Activated naive CD4-positive, alpha-beta T cell treated with anti-CD3 and anti-CD28 coated beads for 36 hours (primary cell): ENCODE measurements at regions of chr11 and their contacts with region 1.

Region 1: GRCh38 chr11:3854977-3855807 is at the start of gene STIM1:
- DNase-seq: peak; percentile 99
- H3K4me3 Mint-ChIP-seq: peak within 1 kb of the TSS; percentile 97
- H3K27ac Mint-ChIP-seq: peak within 1 kb of the TSS; percentile 98
- H3K4me1 Mint-ChIP-seq: peaks cover 55% of the 10 kb centered on the region
- H3K27me3 Mint-ChIP-seq: no peaks in the 10 kb centered on the region
- total RNA-seq, gene STIM1: 62.9 to 68.5 TPM

Region 2: DNA sequence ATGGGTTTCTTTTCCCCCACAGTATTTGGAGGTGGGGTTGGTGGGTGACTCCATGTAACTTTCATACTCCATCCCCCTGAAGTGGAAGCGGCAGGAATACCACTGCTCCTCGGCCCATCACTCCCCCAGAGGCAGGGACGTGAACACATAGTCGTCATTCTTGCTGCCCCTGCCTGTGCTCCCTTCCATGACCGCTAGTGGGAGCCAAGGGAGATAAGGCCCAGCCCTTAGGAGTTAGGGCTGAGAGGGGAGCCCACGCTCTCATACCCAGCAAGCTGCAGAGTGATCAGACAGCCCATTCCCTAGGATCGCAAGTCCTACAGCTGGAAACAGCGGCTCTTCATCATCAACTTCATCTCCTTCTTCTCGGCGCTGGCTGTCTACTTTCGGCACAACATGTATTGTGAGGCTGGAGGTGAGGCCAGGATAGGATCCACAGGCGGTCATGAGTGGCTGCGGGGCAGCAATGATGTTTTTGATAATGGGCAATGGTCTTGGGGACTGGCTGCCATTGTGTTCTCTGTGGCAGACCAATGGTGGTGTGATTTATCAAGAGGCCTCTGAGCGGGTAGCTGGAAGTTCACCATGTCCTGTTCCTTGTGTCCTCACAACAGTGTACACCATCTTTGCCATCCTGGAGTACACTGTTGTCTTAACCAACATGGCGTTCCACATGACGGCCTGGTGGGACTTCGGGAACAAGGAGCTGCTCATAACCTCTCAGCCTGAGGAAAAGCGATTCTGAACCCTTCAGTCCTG is 30.3 kb before region 1 on chr11:
- CTCF ChIA-PET with region 1: interaction called, 8 read pairs
- intact Hi-C with region 1: loop called (anchors 1 kb)
- DNase-seq: peak; percentile 90
- H3K4me3 Mint-ChIP-seq: no peak overlapping the region
- H3K27ac Mint-ChIP-seq: peak overlapping the region; percentile 76
- H3K4me1 Mint-ChIP-seq: peaks cover 21% of the 10 kb centered on the region
- H3K27me3 Mint-ChIP-seq: no peaks in the 10 kb centered on the region

Region 3: DNA sequence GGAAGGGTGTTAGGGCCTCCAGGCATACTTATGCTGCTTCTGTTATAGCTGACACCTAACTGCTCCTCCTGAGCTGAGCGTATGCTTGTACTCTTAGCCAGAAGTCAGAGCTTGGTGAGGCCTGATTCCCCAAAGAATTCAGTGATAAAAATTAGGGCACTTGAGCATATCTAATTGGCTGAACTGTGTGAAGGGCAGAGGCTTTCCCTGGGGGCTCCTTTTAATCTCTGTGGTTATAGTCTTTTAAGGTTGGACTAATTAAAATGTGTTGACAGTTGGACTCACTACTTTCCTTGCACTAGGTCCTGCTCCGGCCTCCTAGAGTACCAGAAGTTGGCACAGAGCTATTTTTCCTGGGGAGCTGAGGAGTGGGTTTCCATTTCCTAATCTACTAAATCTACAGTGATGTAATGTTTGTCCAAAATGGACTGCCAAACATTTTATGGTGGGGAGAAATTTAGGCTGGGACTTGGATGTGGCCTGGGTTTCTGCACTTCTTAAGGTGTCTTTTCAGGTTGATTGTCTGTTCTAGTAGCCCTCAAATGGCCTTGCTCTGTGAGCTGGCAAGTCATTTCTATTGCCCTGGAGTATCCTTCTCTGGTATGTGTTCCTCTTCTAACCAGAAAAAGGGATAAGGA is 18.6 kb after region 1 on chr11:
- CTCF ChIA-PET with region 1: interaction called, 95 read pairs
- intact Hi-C with region 1: loop called (anchors 1 kb)
- DNase-seq: no peak
- H3K4me3 Mint-ChIP-seq: no peak overlapping the region
- H3K27ac Mint-ChIP-seq: no peak overlapping the region
- H3K4me1 Mint-ChIP-seq: peaks cover 79% of the 10 kb centered on the region
- H3K27me3 Mint-ChIP-seq: no peaks in the 10 kb centered on the region

Region 4: DNA sequence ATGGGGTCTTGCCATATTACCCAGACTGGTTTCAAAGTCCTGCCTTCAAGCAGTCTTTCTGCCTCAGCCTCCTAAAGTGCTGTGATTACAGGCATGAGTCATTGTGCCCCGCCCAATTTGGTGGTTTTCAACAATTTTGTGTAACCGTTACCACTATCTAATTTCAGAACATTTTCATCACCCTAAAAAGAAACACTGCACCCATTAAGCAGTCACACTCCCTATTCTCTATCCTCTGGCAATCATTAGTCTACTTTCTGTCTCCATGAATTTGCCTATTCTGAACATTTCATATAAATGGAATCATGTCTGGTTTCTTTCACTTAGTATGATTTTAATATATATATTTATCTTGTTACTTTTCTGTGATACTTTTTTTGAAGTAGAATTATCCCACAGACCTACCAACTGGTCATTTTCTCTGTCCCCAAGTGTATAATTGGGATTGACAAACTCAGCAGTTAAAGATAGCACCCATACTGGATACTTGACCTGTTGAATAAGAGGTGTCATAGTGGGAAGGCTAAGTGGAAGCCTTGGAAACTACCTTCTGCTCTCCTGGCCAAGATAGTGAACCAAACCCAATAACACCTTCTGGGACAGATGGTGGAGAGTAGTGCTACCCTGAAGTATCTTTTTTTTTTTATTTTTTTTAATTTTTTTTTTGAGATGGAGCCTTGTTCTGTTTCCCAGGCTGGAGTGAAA is 65.1 kb after region 1 on chr11:
- CTCF ChIA-PET with region 1: interaction called, 10 read pairs
- intact Hi-C with region 1: loop called (anchors 1 kb)
- DNase-seq: peak; percentile 93
- H3K4me3 Mint-ChIP-seq: no peak overlapping the region
- H3K27ac Mint-ChIP-seq: peak overlapping the region; percentile 74
- H3K4me1 Mint-ChIP-seq: peaks cover 61% of the 10 kb centered on the region
- H3K27me3 Mint-ChIP-seq: no peaks in the 10 kb centered on the region

Region 5: DNA sequence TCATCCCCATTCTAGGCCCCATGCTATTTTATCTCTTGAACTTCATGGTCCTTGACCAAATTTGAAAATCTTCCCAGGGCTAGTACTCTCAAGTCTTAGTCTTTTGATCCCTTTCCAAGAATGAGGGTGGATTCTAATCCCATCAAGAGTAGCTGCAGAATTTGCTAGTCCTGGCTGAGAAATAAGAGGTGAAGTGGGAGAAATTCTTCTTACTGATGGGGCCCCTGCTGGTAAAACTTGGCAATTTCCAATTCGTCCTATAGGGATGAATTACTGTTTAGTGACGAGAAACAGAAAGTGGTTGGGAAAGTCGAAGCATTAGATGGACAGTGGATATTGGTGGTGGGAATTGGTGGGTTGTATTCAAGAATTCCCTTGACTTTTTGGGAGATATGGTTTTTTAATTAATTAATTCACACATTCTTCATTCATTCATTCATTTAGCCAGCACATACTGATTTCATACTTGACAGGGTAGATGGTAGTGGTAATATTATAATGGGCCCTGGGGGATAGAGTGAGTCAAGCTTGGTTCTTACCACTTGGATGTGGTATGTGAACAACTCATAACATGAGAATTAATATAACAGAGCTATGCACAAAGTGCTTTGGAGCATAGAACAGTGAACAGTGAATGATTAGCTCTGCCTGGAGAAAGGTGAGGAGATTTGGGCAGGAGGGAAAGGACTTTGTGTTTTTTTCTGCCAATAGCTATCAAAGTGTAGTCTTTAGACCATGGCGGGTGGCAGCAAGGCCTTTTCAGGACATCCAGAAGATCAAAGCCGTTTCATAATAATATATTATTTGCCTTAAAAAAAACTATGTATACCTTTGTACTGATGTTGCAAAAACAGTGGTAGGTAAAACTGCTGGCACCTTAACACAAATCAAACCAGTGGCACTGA is 104.1 kb after region 1 on chr11:
- CTCF ChIA-PET with region 1: interaction called, 17 read pairs
- intact Hi-C with region 1: loop called (anchors 1 kb)
- DNase-seq: no peak
- H3K4me3 Mint-ChIP-seq: no peak overlapping the region
- H3K27ac Mint-ChIP-seq: no peak overlapping the region
- H3K4me1 Mint-ChIP-seq: peaks cover 79% of the 10 kb centered on the region
- H3K27me3 Mint-ChIP-seq: no peaks in the 10 kb centered on the region

Region 6: GRCh38 chr11:3984896-3985295 is 129.7 kb after region 1 on chr11:
- CTCF ChIA-PET with region 1: interaction called, 32 read pairs
- intact Hi-C with region 1: loop called (anchors 1 kb)
- DNase-seq: peak; percentile 80
- H3K4me3 Mint-ChIP-seq: no peak overlapping the region
- H3K27ac Mint-ChIP-seq: peak overlapping the region; percentile 55
- H3K4me1 Mint-ChIP-seq: peaks cover 74% of the 10 kb centered on the region
- H3K27me3 Mint-ChIP-seq: no peaks in the 10 kb centered on the region

Region 7: GRCh38 chr11:4072668-4073285 is 217.6 kb after region 1 on chr11:
- CTCF ChIA-PET with region 1: interaction called, 573 read pairs
- intact Hi-C with region 1: loop called (anchors 1 kb)
- DNase-seq: peak; percentile 67
- H3K4me3 Mint-ChIP-seq: no peak overlapping the region
- H3K27ac Mint-ChIP-seq: peak overlapping the region; percentile 63
- H3K4me1 Mint-ChIP-seq: peaks cover 47% of the 10 kb centered on the region
- H3K27me3 Mint-ChIP-seq: no peaks in the 10 kb centered on the region